ENCODE measurements at regions of chr7 and their contacts with region 1.

Region 1: GRCh38 chr7:131071786-131072504 is 255.7 kb upstream of the MKLN1 start:
- DNase-seq: no peak
- ATAC-seq: no peak
- H3K4me3 ChIP-seq: no peak overlapping the region
- H3K4me3 Mint-ChIP-seq: no peak overlapping the region
- H3K27ac ChIP-seq: no peak overlapping the region
- H3K27ac Mint-ChIP-seq: no peak overlapping the region
- H3K4me1 ChIP-seq: peaks cover 64% of the 10 kb centered on the region
- H3K4me1 Mint-ChIP-seq: peaks cover 84% of the 10 kb centered on the region
- H3K27me3 ChIP-seq: no peaks in the 10 kb centered on the region
- H3K27me3 Mint-ChIP-seq: no peaks in the 10 kb centered on the region
- CTCF ChIP-seq: peak; percentile 50

Region 2: GRCh38 chr7:130891254-130892094 is 180.5 kb before region 1 on chr7:
- CTCF ChIA-PET with region 1: no interaction called
- POLR2A ChIA-PET with region 1: no interaction called
- intact Hi-C with region 1: no loop called
- DNase-seq: no peak
- ATAC-seq: no peak
- H3K4me3 ChIP-seq: no peak overlapping the region
- H3K4me3 Mint-ChIP-seq: no peak overlapping the region
- H3K27ac ChIP-seq: no peak overlapping the region
- H3K27ac Mint-ChIP-seq: no peak overlapping the region
- H3K4me1 ChIP-seq: peaks cover 24% of the 10 kb centered on the region
- H3K4me1 Mint-ChIP-seq: peaks cover 53% of the 10 kb centered on the region
- H3K27me3 ChIP-seq: no peaks in the 10 kb centered on the region
- H3K27me3 Mint-ChIP-seq: no peaks in the 10 kb centered on the region
- CTCF ChIP-seq: no peak

Region 3: GRCh38 chr7:131057015-131057793 is 14.7 kb before region 1 on chr7:
- CTCF ChIA-PET with region 1: interaction called, 14 read pairs
- POLR2A ChIA-PET with region 1: interaction called, 3 read pairs
- intact Hi-C with region 1: no loop called
- DNase-seq: peak in 2 of 9 experiments; percentile 68 to 84
- ATAC-seq: peak; percentile 44
- H3K4me3 ChIP-seq: peak overlapping the region in 1 of 2 experiments; percentile 18
- H3K4me3 Mint-ChIP-seq: peak overlapping the region; percentile 77
- H3K27ac ChIP-seq: peak overlapping the region; percentile 66 to 82
- H3K27ac Mint-ChIP-seq: peak overlapping the region; percentile 96
- H3K4me1 ChIP-seq: peaks cover 73% of the 10 kb centered on the region
- H3K4me1 Mint-ChIP-seq: peaks cover 78% of the 10 kb centered on the region
- H3K27me3 ChIP-seq: no peaks in the 10 kb centered on the region
- H3K27me3 Mint-ChIP-seq: no peaks in the 10 kb centered on the region
- CTCF ChIP-seq: no peak

Region 4: GRCh38 chr7:131302876-131303707 is 231.1 kb after region 1 on chr7:
- CTCF ChIA-PET with region 1: interaction called, 7 read pairs
- POLR2A ChIA-PET with region 1: no interaction called
- intact Hi-C with region 1: loop called (anchors 1 to 5 kb)
- DNase-seq: peak in 7 of 9 experiments; percentile 19 to 60 (median 38)
- ATAC-seq: peak; percentile 56
- H3K4me3 ChIP-seq: no peak overlapping the region
- H3K4me3 Mint-ChIP-seq: no peak overlapping the region
- H3K27ac ChIP-seq: no peak overlapping the region
- H3K27ac Mint-ChIP-seq: no peak overlapping the region
- H3K4me1 ChIP-seq: no peaks in the 10 kb centered on the region
- H3K4me1 Mint-ChIP-seq: no peaks in the 10 kb centered on the region
- H3K27me3 ChIP-seq: no peaks in the 10 kb centered on the region
- H3K27me3 Mint-ChIP-seq: no peaks in the 10 kb centered on the region
- CTCF ChIP-seq: peak; percentile 50

Region 5: GRCh38 chr7:131424219-131424822 is 352.4 kb after region 1 on chr7:
- CTCF ChIA-PET with region 1: interaction called, 5 read pairs
- POLR2A ChIA-PET with region 1: no interaction called
- intact Hi-C with region 1: loop called (anchors 1 to 5 kb)
- DNase-seq: peak in 2 of 9 experiments; percentile 48 to 62
- ATAC-seq: peak; percentile 97
- H3K4me3 ChIP-seq: no peak overlapping the region
- H3K4me3 Mint-ChIP-seq: no peak overlapping the region
- H3K27ac ChIP-seq: no peak overlapping the region
- H3K27ac Mint-ChIP-seq: no peak overlapping the region
- H3K4me1 ChIP-seq: no peaks in the 10 kb centered on the region
- H3K4me1 Mint-ChIP-seq: peaks cover 5% of the 10 kb centered on the region
- H3K27me3 ChIP-seq: no peaks in the 10 kb centered on the region
- H3K27me3 Mint-ChIP-seq: no peaks in the 10 kb centered on the region
- CTCF ChIP-seq: peak; percentile 74

Measured in CD8-positive, alpha-beta T cell (primary cell).